ENCODE measurements at regions of chr3 and their contacts with region 1.

Region 1: GRCh38 chr3:189148081-189148507 is 23.7 kb upstream of the TPRG1 start:
- DNase-seq: peak; percentile 67
- H3K4me3 ChIP-seq: no peak overlapping the region
- H3K27ac ChIP-seq: no peak overlapping the region
- H3K4me1 ChIP-seq: peaks cover 0 to 7% (median 4%) of the 10 kb centered on the region in 4 donors
- H3K27me3 ChIP-seq: no peaks in the 10 kb centered on the region
- CTCF ChIP-seq: peak; percentile 80 to 83 (median 81)
- EP300 ChIP-seq: no peak
- POLR2A ChIP-seq: no peak

Region 2: GRCh38 chr3:188978421-188979171 is 169.5 kb before region 1 on chr3:
- in situ Hi-C with region 1: no loop called
- intact Hi-C with region 1: loop called (anchors 10 kb)
- DNase-seq: no peak
- H3K4me3 ChIP-seq: no peak overlapping the region
- H3K27ac ChIP-seq: peak overlapping the region; percentile 30 to 51 (median 38)
- H3K4me1 ChIP-seq: peaks cover 0 to 15% (median 2%) of the 10 kb centered on the region in 4 donors
- H3K27me3 ChIP-seq: no peaks in the 10 kb centered on the region
- CTCF ChIP-seq: no peak
- EP300 ChIP-seq: no peak
- POLR2A ChIP-seq: no peak

Measured in transverse colon (tissue), 4 donors.